MCF 10A (cell line): ENCODE measurements at regions of chr10 and their contacts with region 1.

Region 1: GRCh38 chr10:4532467-4532866 is 293.5 kb upstream of the AKR1E2 start:
- DNase-seq: peak; percentile 41
- H3K4me3 Mint-ChIP-seq: peak overlapping the region; percentile 6
- H3K27ac Mint-ChIP-seq: peak overlapping the region; percentile 87
- H3K4me1 Mint-ChIP-seq: peaks cover 17% of the 10 kb centered on the region
- H3K27me3 Mint-ChIP-seq: no peaks in the 10 kb centered on the region
- CTCF ChIP-seq: no peak

Region 2: DNA sequence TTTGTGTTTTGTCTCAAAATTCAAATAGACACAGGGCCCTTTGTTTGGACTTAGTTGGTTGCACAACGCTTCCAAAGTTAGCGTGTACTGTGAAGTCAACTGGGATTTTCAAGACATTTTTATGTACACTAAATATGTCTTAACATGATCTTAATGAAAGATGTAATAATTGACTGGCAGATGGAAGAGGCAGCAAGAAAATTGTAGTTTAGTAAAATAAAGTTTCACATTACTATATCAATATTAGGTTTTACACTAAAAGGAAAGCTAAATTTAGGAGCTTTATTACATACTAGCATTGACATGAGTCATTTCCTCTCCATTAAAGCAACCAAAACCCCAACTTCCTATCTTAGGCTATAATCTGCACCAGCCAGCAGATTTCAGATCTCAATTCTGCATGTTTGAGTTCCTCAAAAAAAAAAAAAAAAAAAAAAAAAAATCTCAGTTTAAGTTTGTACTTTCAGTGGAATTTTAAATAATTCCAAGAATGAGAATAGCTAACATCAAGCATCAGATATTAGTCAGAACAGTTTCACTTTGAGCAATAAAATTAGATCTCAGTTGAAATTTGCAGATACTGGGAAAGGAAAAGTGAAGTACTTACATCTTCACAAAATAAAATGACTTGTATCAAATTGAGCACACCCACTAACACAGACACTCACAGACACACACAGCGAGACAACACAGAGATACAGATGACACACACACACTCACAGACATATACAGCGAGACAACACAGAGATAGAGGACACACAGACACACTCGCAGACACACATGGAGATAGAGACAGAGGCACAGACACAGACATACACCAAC is 400.8 kb before region 1 on chr10:
- CTCF ChIA-PET with region 1: no interaction called
- POLR2A ChIA-PET with region 1: no interaction called
- intact Hi-C with region 1: loop called (anchors 5 kb)
- DNase-seq: peak; percentile 73
- H3K4me3 Mint-ChIP-seq: no peak overlapping the region
- H3K27ac Mint-ChIP-seq: no peak overlapping the region
- H3K4me1 Mint-ChIP-seq: no peaks in the 10 kb centered on the region
- H3K27me3 Mint-ChIP-seq: no peaks in the 10 kb centered on the region
- CTCF ChIP-seq: no peak

Region 3: DNA sequence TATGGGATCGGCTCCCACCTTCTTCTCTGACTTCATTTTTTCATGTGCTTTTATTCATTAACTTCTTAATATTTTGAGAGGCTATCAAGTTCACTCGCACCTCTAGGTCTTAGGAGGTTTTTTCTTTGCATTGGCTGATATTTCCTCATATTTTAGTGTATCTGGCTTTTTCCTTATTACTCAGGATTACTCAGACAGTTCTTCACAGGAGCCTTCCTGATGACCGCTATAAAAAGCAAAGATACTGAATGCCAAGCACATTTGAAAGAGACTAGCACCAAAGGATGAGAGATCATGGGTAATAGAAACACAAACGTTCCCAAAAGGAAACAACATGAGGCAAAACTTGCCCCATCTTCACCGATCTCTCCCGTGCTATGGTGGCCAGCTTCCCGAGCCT is 338.2 kb before region 1 on chr10:
- CTCF ChIA-PET with region 1: no interaction called
- POLR2A ChIA-PET with region 1: no interaction called
- intact Hi-C with region 1: no loop called
- DNase-seq: peak; percentile 4
- H3K4me3 Mint-ChIP-seq: no peak overlapping the region
- H3K27ac Mint-ChIP-seq: no peak overlapping the region
- H3K4me1 Mint-ChIP-seq: peaks cover 13% of the 10 kb centered on the region
- H3K27me3 Mint-ChIP-seq: no peaks in the 10 kb centered on the region
- CTCF ChIP-seq: no peak

Region 4: GRCh38 chr10:4353964-4354363 is 178.5 kb before region 1 on chr10:
- CTCF ChIA-PET with region 1: no interaction called
- POLR2A ChIA-PET with region 1: interaction called, 12 read pairs
- intact Hi-C with region 1: no loop called
- DNase-seq: peak; percentile 73
- H3K4me3 Mint-ChIP-seq: peak overlapping the region; percentile 17
- H3K27ac Mint-ChIP-seq: peak overlapping the region; percentile 90
- H3K4me1 Mint-ChIP-seq: peaks cover 44% of the 10 kb centered on the region
- H3K27me3 Mint-ChIP-seq: no peaks in the 10 kb centered on the region
- CTCF ChIP-seq: no peak